ENCODE measurements at regions of chr1 and their contacts with region 1.

Region 1: GRCh38 chr1:90834886-90835660 is 118.0 kb upstream of the BARHL2 start:
- DNase-seq: peak in 1 of 5 donors; percentile 16
- H3K4me3 ChIP-seq: no peak overlapping the region
- H3K4me3 Mint-ChIP-seq: peak overlapping the region in 7 of 8 donors; percentile 5 to 73 (median 60)
- H3K27ac ChIP-seq: no peak overlapping the region
- H3K27ac Mint-ChIP-seq: no peak overlapping the region
- H3K4me1 ChIP-seq: peaks cover 23% of the 10 kb centered on the region
- H3K4me1 Mint-ChIP-seq: peaks cover 17 to 37% (median 20%) of the 10 kb centered on the region in 4 donors
- H3K27me3 ChIP-seq: peaks cover 87% of the 10 kb centered on the region
- H3K27me3 Mint-ChIP-seq: peaks cover 73 to 76% of the 10 kb centered on the region in 2 donors

Region 2: DNA sequence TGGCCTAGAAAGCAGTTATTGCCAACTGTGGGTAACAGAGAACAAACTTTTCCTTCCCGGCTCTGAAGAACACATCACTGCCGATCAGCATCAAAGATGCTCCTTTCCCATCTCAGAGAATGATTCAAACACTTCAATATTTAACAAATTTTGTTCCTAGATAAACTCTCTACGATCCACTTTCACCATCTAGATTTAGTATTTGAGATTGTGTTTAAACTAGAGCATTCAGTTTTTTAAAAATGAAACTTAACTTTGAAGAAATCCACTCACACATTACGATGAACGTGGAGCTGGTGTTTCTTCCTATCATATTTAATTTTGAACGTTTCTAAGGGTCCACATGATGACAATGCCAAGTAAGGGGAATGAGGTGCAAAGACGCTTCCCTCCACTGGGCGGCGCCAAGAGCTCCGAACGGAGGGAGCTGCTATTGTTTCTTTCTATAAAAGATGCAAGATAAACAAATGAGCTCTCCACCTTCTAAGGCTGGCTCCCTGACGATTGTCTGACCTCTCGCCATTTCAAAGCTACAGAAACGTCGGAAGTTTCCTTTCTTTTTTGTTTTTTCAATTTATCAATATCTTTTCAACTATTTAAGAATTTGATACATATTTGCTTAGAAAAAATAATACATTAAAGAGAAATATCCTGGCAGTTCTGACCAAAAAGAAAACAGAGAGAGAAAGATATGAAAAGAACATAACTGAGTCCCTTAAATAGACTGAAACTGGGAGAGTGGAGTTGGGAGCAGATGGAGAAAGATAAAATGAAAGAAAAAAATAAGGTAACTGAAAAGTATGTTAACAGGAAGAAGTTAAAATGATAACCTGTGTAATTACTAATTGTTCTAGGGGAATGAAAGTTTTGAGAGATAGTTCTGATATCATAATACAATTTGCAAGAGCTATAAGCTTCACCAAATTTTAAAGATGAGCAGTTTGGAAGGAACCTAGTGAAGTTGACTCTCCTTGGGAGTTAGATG is 113.6 kb before region 1 on chr1:
- CTCF ChIA-PET with region 1: no interaction called
- POLR2A ChIA-PET with region 1: no interaction called
- intact Hi-C with region 1: loop called (anchors 10 kb)
- DNase-seq: peak in 1 of 5 donors; percentile 48
- H3K4me3 ChIP-seq: no peak overlapping the region
- H3K4me3 Mint-ChIP-seq: peak overlapping the region in 5 of 8 donors; percentile 30 to 57 (median 36)
- H3K27ac ChIP-seq: no peak overlapping the region
- H3K27ac Mint-ChIP-seq: peak overlapping the region in 3 of 7 donors; percentile 65 to 66 (median 66)
- H3K4me1 ChIP-seq: peaks cover 36% of the 10 kb centered on the region
- H3K4me1 Mint-ChIP-seq: peaks cover 26 to 64% (median 42%) of the 10 kb centered on the region in 4 donors
- H3K27me3 ChIP-seq: peaks cover 77% of the 10 kb centered on the region
- H3K27me3 Mint-ChIP-seq: peaks cover 73 to 77% of the 10 kb centered on the region in 2 donors

Region 3: GRCh38 chr1:90781534-90781933 is 53.5 kb before region 1 on chr1:
- CTCF ChIA-PET with region 1: no interaction called
- POLR2A ChIA-PET with region 1: no interaction called
- intact Hi-C with region 1: no loop called
- DNase-seq: no peak
- H3K4me3 ChIP-seq: no peak overlapping the region
- H3K4me3 Mint-ChIP-seq: no peak overlapping the region
- H3K27ac ChIP-seq: no peak overlapping the region
- H3K27ac Mint-ChIP-seq: no peak overlapping the region
- H3K4me1 ChIP-seq: no peaks in the 10 kb centered on the region
- H3K4me1 Mint-ChIP-seq: peaks cover 0 to 2% (median 0%) of the 10 kb centered on the region in 4 donors
- H3K27me3 ChIP-seq: no peaks in the 10 kb centered on the region
- H3K27me3 Mint-ChIP-seq: peaks cover 11 to 18% of the 10 kb centered on the region in 2 donors

Region 4: DNA sequence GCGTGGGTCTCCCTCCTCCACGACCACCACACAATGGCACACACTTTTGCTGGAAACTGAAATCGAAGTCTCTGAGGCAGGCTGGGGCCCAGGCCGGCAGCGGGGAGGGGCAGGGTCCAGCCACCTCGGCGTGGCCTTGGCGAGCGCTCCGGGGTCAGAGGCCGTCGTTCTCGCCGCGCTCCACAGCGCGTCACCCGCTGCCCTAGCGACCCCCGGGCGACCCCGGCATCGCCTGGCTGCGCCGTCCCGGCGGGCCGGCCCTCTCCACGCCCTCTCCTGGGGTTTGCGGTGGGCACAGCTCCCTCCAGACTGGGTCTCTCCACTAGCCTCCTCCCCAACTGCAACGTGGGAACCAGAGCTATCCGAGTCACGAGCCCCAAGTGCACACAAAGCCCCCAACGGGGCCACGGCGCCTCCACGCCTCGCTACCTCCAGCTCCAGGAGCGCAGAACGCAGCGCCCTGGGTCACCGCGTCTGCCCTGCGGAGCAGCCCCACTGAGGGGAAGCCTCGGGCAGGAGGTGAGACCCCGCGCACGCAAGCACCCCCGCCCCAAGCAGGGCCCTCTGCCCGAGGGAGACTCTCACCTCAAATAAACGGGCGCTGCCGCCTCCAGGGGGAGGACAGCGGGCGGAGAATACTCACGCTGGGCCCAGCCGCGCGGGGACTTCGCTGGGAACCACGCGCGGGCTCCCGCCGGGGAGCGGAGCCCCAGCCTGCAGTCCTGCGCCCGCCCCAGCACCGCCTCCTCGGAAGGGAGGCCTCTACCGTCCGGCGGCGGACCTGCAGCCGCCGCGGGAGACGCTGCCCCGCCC is 16.0 kb after region 1 on chr1:
- CTCF ChIA-PET with region 1: interaction called, 4 read pairs
- POLR2A ChIA-PET with region 1: no interaction called
- intact Hi-C with region 1: loop called (anchors 2 kb)
- DNase-seq: peak; percentile 63 to 68 (median 67)
- H3K4me3 ChIP-seq: peak overlapping the region; percentile 52 to 71
- H3K4me3 Mint-ChIP-seq: peak overlapping the region; percentile 79 to 88 (median 84)
- H3K27ac ChIP-seq: no peak overlapping the region
- H3K27ac Mint-ChIP-seq: no peak overlapping the region
- H3K4me1 ChIP-seq: peaks cover 17% of the 10 kb centered on the region
- H3K4me1 Mint-ChIP-seq: peaks cover 8 to 14% (median 13%) of the 10 kb centered on the region in 4 donors
- H3K27me3 ChIP-seq: peaks cover 10% of the 10 kb centered on the region
- H3K27me3 Mint-ChIP-seq: peaks cover 23 to 27% of the 10 kb centered on the region in 2 donors

Region 5: GRCh38 chr1:90864681-90865080 is 29.6 kb after region 1 on chr1:
- CTCF ChIA-PET with region 1: no interaction called
- POLR2A ChIA-PET with region 1: no interaction called
- intact Hi-C with region 1: no loop called
- DNase-seq: no peak
- H3K4me3 ChIP-seq: no peak overlapping the region
- H3K4me3 Mint-ChIP-seq: no peak overlapping the region
- H3K27ac ChIP-seq: no peak overlapping the region
- H3K27ac Mint-ChIP-seq: no peak overlapping the region
- H3K4me1 ChIP-seq: no peaks in the 10 kb centered on the region
- H3K4me1 Mint-ChIP-seq: no peaks in the 10 kb centered on the region
- H3K27me3 ChIP-seq: no peaks in the 10 kb centered on the region
- H3K27me3 Mint-ChIP-seq: peaks cover 9% of the 10 kb centered on the region in 2 donors

Measured in CD4-positive, alpha-beta memory T cell (primary cell).